Activated T-helper 1 cell treated with anti-CD3 and anti-CD28 coated beads, Interleukin-12 subunit alpha, Interleukin-12 subunit beta, Interleukin-2, Interleukin-4 antibody, amounts not matched to agents 30 ng/mL and 10 ng/mL and 1 ng/mL, durations not matched to agents 14 hours and 24 hours and 36 hours (primary cell): ENCODE measurements at regions of chr7 and their contacts with region 1.

Region 1: GRCh38 chr7:87219545-87220025 is at the start of gene TMEM243:
- DNase-seq: peak; percentile 79
- H3K4me3 Mint-ChIP-seq: peak within 1 kb of the TSS; percentile 100
- H3K27ac Mint-ChIP-seq: peak within 1 kb of the TSS; percentile 96
- H3K4me1 Mint-ChIP-seq: peaks cover 45% of the 10 kb centered on the region
- H3K27me3 Mint-ChIP-seq: peaks cover 11% of the 10 kb centered on the region
- total RNA-seq, gene TMEM243: 49.2 and 50.5 TPM in 2 replicates

Region 2: DNA sequence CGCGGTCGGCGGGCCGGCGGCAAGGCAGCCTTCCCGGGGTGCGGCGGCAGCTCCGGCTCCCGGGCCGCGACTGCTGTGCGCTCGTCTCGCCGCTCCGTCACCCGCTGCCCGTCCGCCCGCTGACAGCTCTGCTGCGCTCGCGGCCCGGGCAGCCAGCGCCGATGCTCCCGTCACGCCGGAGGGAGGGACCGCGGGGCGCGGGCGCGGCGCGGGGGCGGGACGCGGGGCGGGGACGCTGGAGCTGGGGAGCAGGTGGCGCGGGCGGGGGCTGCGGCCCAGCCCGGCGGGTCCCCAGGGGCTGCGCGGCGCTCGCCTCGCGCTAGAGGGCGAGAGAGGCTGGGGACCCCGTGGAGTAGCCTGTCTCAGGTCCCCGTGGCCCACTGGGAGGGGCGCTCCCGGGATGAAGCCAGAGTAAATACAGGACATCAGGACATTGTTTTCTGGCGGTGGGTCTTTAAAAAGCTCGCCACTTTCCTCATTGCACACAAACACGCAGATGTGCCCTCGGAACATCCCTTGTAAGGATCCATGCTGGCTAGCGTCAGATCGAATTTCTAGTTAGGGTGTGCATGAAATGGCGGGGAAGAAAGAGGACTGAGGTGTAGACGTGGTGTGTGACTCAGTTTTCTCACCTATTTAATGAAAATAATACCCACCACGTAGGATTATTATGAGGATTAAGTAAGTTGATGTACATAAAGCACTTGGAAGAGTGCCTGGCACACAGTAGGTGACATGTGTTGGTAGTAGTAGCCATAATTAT is 159.9 kb before region 1 on chr7 and contains the start of gene ELAPOR2:
- intact Hi-C with region 1: loop called (anchors 2 kb)
- DNase-seq: peak; percentile 70
- H3K4me3 Mint-ChIP-seq: peak within 1 kb of the TSS; percentile 70
- H3K27ac Mint-ChIP-seq: peak within 1 kb of the TSS; percentile 20
- H3K4me1 Mint-ChIP-seq: peaks cover 8% of the 10 kb centered on the region
- H3K27me3 Mint-ChIP-seq: peaks cover 17% of the 10 kb centered on the region
- total RNA-seq, gene ELAPOR2: 1.3 and 2.3 TPM in 2 replicates

Region 3: DNA sequence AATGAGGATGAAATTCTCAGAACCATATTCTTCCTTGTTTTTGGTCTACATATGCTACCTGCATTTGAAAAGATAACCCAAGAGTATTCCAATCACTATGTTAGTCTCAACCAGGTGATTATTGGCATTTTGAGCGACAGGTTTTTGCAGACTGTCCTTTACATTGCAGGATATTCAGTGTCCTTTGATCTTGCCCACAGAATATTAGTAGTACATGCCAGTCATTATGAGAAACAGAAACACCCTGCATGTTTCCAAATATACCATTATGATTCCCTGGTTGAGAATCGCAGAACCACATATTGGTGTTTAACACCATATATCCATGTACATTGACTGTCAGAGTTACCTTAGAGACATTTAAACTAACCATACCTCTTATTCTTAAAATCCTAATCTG is 30.7 kb before region 1 on chr7:
- intact Hi-C with region 1: loop called (anchors 5 kb)
- DNase-seq: no peak
- H3K4me3 Mint-ChIP-seq: no peak overlapping the region
- H3K27ac Mint-ChIP-seq: no peak overlapping the region
- H3K4me1 Mint-ChIP-seq: peaks cover 29% of the 10 kb centered on the region
- H3K27me3 Mint-ChIP-seq: no peaks in the 10 kb centered on the region

Region 4: DNA sequence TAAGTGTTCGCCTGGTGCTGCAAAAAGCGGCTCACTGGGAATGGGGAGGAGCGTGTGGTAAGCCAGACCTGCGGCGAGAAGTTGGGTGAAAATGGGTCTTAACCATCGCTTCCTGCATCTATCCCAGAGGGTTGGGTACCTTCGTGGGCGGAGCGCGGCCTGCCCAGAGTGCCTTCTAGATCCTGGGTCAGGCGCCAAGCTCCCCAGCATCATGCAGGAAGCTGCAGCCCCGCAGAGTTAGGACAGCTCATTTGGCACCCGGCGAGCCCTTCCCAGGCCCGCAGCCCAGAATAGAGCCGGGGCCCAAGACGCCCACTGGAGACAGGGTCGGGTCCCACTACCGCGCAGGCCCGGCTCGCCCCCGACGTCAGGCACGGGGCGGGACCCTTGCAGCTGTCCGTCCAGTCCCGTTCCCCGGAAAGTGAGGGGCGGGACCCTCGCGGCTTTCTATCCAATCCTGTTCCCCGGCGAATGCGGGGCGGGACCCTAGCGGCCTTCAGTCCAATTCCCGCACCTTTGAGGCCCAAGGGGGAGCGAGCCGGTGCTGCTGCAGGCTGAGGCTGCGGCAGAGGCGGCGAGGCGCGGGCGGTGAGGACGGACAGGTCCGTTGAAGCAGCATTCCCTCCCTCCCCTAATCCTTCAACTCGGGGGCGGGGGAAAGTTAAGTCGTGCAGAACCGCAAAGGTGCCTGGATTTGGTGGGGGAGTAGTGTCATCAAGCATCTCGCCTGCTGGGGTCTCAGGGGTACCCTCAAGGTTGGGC is 125.8 kb after region 1 on chr7 and contains the start of gene CROT:
- intact Hi-C with region 1: loop called (anchors 1 kb)
- DNase-seq: peak; percentile 93
- H3K4me3 Mint-ChIP-seq: peak within 1 kb of the TSS; percentile 92
- H3K27ac Mint-ChIP-seq: peak within 1 kb of the TSS; percentile 89
- H3K4me1 Mint-ChIP-seq: peaks cover 57% of the 10 kb centered on the region
- H3K27me3 Mint-ChIP-seq: peaks cover 1% of the 10 kb centered on the region
- total RNA-seq, gene CROT: 5.9 and 6.5 TPM in 2 replicates

Region 5: DNA sequence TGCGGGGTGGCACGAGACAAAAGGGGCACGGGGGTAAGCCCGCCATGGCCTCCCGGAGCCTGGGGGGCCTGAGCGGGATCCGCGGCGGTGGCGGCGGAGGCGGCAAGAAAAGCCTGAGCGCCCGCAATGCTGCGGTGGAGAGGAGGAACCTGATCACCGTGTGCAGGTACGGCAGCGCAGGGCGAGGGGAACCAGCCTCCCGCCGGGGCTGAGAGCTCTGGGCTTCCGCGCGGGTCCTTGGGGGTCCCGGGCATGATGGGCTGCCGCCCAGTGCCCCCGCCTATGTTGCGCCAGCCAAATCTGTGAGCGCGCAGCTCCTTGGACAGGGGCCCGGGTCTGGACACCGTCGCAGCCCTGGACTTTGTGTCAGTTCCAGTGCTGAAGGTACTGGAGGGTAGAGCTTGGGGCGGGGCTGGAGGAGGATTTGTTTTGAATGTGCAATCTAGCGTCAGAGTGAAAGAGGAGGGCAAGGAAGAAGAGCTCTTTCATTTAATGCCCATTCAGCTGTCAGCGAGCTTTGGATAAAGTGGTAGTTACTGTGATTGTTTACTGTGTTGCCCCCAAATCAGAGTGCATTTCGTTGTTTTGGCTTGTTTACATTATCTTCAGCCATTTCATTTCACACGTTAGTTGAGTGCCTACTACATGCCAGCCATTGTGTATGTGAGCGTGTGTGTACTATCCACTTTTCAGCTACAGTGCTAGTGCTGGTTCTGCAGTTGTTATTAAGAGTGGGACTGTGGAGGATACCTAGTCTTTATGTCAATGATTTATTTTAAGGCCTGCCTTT is 409.4 kb after region 1 on chr7:
- intact Hi-C with region 1: loop called (anchors 5 kb)
- DNase-seq: no peak
- H3K4me3 Mint-ChIP-seq: peak overlapping the region; percentile 72
- H3K27ac Mint-ChIP-seq: no peak overlapping the region
- H3K4me1 Mint-ChIP-seq: peaks cover 6% of the 10 kb centered on the region
- H3K27me3 Mint-ChIP-seq: peaks cover 29% of the 10 kb centered on the region